Posterior vena cava (tissue), 2 donors: ENCODE measurements at regions of chr7 and their contacts with region 1.

Region 1: GRCh38 chr7:136339464-136339863 is 362.3 kb upstream of the MTPN start:
- DNase-seq: no peak

Region 2: GRCh38 chr7:136293272-136293671 is 46.2 kb before region 1 on chr7:
- intact Hi-C with region 1: loop called in 1 of 2 experiments (anchors 2 kb)
- DNase-seq: no peak